Heart right ventricle (tissue), 16 donors: ENCODE measurements at regions of chr5 and their contacts with region 1.

Region 1: DNA sequence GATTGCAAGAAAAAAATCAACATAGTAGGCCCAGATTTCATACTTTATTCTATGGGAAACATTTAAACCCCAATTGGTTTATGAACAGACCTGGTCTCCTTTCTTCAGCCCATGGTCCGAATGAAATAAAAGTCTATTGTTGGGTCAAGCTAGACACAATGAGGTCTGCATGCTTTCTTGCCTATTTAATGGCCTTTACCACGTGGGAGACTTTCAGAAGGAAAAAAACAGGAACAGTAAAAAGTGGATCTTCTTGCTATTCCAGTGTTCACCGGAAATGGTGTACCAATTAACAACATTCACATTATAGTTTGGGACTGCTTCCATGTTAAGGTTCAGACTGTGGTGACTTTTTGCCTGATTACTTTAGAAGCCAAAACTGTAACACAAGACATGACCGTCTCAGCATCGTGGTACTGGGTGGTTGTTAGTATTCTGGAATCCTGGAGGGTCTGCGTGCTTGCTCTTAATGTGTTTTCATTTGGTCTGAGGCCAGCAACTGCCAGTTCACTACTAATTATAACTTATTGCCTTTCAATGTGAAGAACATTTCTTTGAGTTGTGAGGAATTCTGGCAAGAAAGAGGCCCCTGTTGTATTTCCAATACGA is 85.4 kb upstream of the PRRC1 start:
- DNase-seq: no peak
- ATAC-seq: no peak
- H3K4me3 ChIP-seq: no peak overlapping the region
- H3K27ac ChIP-seq: no peak overlapping the region
- H3K4me1 ChIP-seq: peaks cover 0 to 9% (median 0%) of the 10 kb centered on the region in 9 donors
- H3K27me3 ChIP-seq: no peaks in the 10 kb centered on the region
- CTCF ChIP-seq: no peak

Region 2: DNA sequence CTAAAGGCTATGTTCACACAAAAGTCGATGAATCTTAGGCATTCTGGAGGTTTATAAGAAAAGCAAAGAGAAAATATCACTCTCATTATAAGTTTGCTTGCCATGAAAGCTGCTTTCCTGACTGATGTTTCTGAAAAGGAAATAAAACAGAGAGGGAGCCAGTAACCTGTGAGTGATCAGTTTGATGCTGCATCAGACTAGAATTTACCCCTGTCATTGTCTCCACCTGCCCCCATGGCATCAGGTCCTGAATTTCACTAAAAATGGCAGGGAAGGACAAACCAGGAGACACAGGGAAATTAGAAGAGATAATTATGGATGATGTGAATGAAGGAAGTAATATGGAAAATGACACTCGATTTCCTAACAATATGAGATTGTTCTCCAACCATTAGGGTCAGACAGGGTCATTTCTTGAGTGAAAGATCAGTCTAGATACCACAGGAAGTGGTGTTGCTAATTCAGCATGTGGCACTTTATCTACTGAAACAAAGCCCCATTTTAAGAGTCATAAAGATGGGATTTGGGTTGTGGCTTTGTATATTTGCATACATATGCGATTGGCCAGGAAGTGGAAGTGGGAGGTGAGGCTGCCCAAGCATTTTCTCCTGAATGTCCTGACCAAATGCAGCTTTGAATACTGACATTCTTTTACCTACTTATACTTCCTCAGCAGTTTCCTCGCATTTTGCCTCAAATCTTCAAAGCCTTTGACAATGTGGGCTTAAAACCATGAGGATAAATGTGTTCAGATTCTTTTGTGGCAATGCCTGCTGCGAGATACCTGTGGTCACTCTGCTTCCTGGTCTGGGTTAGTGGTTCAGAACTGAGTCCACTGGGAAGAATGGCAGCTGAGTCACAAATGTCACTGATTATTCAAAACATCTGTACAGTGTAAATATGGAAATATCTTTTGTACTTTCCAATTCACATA is 111.8 kb before region 1 on chr5:
- intact Hi-C with region 1: loop called in 1 of 10 experiments (anchors 10 kb)
- DNase-seq: no peak
- ATAC-seq: no peak
- H3K4me3 ChIP-seq: no peak overlapping the region
- H3K27ac ChIP-seq: no peak overlapping the region
- H3K4me1 ChIP-seq: no peaks in the 10 kb centered on the region
- H3K27me3 ChIP-seq: no peaks in the 10 kb centered on the region
- CTCF ChIP-seq: no peak

Region 3: GRCh38 chr5:128920345-128921215 is 1488.5 kb after region 1 on chr5:
- intact Hi-C with region 1: no loop called
- DNase-seq: peak in 1 of 2 donors; percentile 61
- ATAC-seq: peak; percentile 81 to 96 (median 92)
- H3K4me3 ChIP-seq: no peak overlapping the region
- H3K27ac ChIP-seq: peak overlapping the region in 8 of 10 donors; percentile 11 to 75 (median 60)
- H3K4me1 ChIP-seq: peaks cover 0 to 5% (median 0%) of the 10 kb centered on the region in 9 donors
- H3K27me3 ChIP-seq: no peaks in the 10 kb centered on the region
- CTCF ChIP-seq: no peak